WTC11 (cell line): ENCODE measurements at regions of chr3 and their contacts with region 1.

Region 1: GRCh38 chr3:149501524-149501923 is 27.0 kb downstream of the TM4SF4 start:
- DNase-seq: no peak
- ATAC-seq: no peak
- H3K4me3 Mint-ChIP-seq: no peak overlapping the region
- H3K27ac Mint-ChIP-seq: no peak overlapping the region
- H3K4me1 Mint-ChIP-seq: peaks cover 4% of the 10 kb centered on the region
- H3K27me3 Mint-ChIP-seq: no peaks in the 10 kb centered on the region; the same call in 1 of the 2 replicates
- CTCF ChIP-seq: no peak

Region 2: DNA sequence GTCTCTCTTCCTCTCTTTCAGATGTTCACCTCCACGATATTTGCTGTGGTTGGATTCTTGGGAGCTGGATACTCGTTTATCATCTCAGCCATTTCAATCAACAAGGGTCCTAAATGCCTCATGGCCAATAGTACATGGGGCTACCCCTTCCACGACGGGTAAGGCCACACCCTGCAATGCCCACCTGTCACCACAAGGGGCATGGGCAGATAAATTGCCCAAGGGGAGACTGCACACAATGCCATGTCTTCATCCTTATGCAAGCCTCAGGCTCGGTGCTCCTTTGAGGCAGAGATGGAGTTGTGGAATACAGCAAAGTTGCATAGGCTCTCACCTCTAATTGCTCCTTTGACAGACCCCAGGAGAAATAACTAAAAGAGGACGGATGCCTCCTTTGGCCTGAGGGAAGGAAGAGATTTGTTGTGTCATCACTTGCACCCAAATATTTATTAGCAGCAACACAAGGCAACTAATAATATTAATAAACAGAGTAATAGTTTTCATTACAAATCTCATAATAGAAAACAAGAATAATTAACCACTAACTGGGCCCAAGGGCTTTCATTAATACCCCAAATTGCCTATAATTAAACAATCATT is 13.8 kb before region 1 on chr3:
- CTCF ChIA-PET with region 1: interaction called, 11 read pairs
- POLR2A ChIA-PET with region 1: no interaction called
- DNase-seq: peak; percentile 81
- ATAC-seq: peak; percentile 86
- H3K4me3 Mint-ChIP-seq: no peak overlapping the region
- H3K27ac Mint-ChIP-seq: no peak overlapping the region
- H3K4me1 Mint-ChIP-seq: no peaks in the 10 kb centered on the region
- H3K27me3 Mint-ChIP-seq: no peaks in the 10 kb centered on the region
- CTCF ChIP-seq: peak; percentile 83